Dorsolateral prefrontal cortex (tissue), 120 donors: ENCODE measurements at regions of chr13 and their contacts with region 1.

Region 1: DNA sequence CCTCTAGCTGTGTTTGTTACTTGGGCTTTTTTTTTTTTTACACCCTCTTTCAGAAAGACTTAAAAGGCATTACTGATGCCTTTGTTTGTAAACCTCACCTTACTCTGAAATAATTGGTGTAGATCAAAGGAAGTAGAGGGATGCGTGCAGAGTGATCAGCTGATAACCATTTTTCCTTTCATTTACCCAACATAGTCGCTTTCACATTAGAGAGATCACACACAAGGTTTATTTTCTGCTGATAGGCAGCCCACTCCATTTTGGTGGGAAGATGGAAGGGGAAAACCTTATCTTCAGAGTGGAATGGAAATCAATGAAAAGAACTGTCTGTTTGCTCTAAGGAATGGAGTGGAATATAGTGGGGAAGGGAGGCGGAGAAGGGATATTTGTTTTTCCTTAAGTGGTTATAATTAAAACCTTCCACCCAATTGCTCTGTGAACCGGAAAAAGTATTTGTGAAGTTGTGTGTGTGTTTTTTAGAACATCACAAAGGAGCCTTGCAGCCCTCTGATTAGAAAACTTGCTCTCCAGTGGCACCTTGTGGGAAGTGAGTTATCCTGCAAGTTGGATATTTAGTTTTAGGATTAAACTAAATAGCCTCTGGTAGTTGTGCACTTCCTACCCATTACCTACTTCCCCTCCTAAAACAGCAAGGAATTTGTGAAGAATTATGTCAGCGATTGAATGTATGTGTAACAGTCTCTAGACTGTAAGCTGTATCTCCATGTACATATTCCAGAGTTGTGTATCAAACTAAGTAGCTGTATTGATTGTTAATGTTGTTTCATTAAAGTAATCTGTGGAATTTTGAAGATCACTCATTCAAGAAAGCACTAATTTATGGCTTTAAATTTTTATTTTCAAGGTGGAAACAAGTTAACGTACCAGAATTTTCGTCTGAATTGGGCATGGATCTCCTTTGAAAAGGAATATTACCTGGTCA is 76.8 kb downstream of the FREM2 start:
- DNase-seq: peak in 3 of 10 donors; percentile 6 to 29 (median 12)
- H3K4me3 ChIP-seq: peak overlapping the region in 14 of 59 donors; percentile 3 to 42 (median 20)
- H3K27ac ChIP-seq: peak overlapping the region in 14 of 59 donors; percentile 6 to 62 (median 26)
- H3K27me3 ChIP-seq: peaks cover 0 to 5% (median 0%) of the 10 kb centered on the region in 45 donors
- CTCF ChIP-seq: peak; percentile 29 to 84 (median 68)

Region 2: DNA sequence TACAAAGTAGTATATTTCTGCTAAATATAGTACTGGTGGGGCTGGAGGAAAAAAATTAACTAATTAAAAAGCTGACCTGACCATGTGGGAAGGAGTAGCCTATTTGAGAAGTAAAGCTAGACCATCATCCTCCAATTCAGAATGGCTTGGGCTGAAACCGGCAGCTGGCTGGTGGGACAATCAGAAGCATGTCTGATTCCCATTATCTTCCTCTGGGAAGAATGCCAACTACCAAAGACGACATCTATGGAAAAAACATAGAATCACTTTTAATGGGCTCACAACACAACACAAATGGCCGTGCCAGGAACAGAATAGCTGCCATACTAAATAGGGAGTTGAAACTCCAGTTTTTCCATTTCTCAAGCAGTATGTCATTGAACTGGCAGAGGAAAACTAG is 197.2 kb before region 1 on chr13:
- intact Hi-C with region 1: loop called in 1 of 2 experiments (anchors 10 kb)
- DNase-seq: no peak
- H3K4me3 ChIP-seq: no peak overlapping the region
- H3K27ac ChIP-seq: peak overlapping the region in 4 of 59 donors; percentile 3 to 32 (median 17)
- H3K27me3 ChIP-seq: peaks cover 0 to 4% (median 0%) of the 10 kb centered on the region in 45 donors
- CTCF ChIP-seq: no peak

Region 3: GRCh38 chr13:38662362-38662761 is 101.3 kb before region 1 on chr13:
- intact Hi-C with region 1: no loop called
- DNase-seq: no peak
- H3K4me3 ChIP-seq: no peak overlapping the region
- H3K27ac ChIP-seq: no peak overlapping the region
- H3K27me3 ChIP-seq: peaks cover 0 to 11% (median 0%) of the 10 kb centered on the region in 45 donors
- CTCF ChIP-seq: no peak

Region 4: GRCh38 chr13:38686577-38687245 is 77.0 kb before region 1 on chr13 and contains the start of gene FREM2:
- intact Hi-C with region 1: loop called (anchors 2 to 5 kb)
- DNase-seq: peak in 6 of 10 donors; percentile 41 to 66 (median 47)
- H3K4me3 ChIP-seq: peak within 1 kb of the TSS; percentile 36 to 82 (median 62)
- H3K27ac ChIP-seq: peak within 1 kb of the TSS in 10 of 59 donors; percentile 4 to 59 (median 26)
- H3K27me3 ChIP-seq: peaks cover 0 to 54% (median 27%) of the 10 kb centered on the region in 45 donors
- CTCF ChIP-seq: no peak
- total RNA-seq, gene FREM2: 0.56 to 8.2 (median 3.0) TPM

Region 5: DNA sequence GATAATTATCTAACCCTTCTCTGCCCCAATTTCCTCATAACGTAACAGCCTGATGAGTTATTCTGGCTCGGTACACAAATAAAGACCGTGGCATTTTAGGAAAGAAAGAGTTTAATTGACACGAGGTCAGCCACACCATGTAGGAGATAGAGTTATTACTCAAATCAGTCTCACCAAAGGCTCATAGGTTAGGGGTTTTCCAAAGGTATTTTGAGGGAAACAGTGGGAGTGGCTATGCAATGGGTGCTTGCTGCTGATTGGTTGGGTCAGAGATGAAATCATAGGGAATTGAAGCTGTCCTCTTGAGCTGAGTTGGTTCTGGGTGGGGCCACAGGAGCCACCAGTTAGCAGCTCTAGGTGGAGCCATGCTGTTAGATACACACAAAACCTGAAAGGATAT is 60.6 kb after region 1 on chr13:
- intact Hi-C with region 1: loop called (anchors 2 kb)
- DNase-seq: no peak
- H3K4me3 ChIP-seq: no peak overlapping the region
- H3K27ac ChIP-seq: no peak overlapping the region
- H3K27me3 ChIP-seq: no peaks in the 10 kb centered on the region
- CTCF ChIP-seq: no peak

Region 6: GRCh38 chr13:38872693-38873092 is 109.0 kb after region 1 on chr13:
- intact Hi-C with region 1: loop called in 1 of 2 experiments (anchors 5 kb)
- DNase-seq: peak; percentile 20 to 76 (median 48)
- H3K4me3 ChIP-seq: peak overlapping the region in 2 of 59 donors; percentile 3 to 25
- H3K27ac ChIP-seq: no peak overlapping the region
- H3K27me3 ChIP-seq: no peaks in the 10 kb centered on the region
- CTCF ChIP-seq: peak in 55 of 56 donors; percentile 25 to 80 (median 59)

Region 7: GRCh38 chr13:38898481-38898880 is 134.8 kb after region 1 on chr13:
- intact Hi-C with region 1: no loop called
- DNase-seq: no peak
- H3K4me3 ChIP-seq: no peak overlapping the region
- H3K27ac ChIP-seq: no peak overlapping the region
- H3K27me3 ChIP-seq: no peaks in the 10 kb centered on the region
- CTCF ChIP-seq: no peak